Activated CD8-positive, alpha-beta memory T cell treated with anti-CD3 and anti-CD28 coated beads, Interleukin-2, amount 10 ng/mL, durations not matched to agents 7 days and 5 days (primary cell): ENCODE measurements at regions of chr11 and their contacts with region 1.

Region 1: DNA sequence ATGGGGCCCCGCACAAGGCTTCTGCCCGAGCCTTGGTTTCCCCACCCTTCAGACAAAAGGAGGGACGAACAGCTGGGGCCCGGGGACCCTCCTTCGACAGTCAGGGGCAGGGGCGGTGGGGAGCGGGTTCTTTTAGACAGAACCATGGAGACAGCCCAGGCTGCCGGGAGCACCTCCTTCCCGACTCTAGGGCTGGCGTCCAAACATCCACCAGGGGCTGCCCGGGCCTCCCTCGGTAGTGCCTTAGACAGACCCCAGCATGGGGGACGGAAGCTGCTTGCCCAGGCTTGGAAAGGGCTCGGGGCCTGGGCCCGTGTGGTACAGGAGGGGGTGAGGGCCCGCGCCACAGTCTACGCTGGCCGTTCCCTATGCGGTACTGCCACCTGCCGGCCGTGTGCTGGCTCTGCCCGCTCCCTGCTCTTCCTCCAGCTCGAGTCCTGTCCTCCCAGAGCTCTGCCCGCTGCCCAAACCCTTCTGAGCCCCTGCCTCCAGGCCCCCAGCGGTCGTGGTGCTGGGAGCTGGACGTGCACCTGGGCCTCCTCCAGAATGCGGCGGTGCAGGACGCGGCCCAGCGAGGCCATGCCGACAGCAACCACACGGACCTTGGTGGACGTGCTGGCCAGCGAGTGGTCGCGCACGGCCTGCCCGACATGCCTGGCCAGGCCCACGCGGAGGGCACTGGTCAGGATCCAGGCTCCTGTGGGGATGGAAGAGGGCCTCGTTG is 20.1 kb downstream of the TSSC4 start:
- DNase-seq: peak; percentile 75
- ATAC-seq: peak; percentile 93
- H3K4me3 Mint-ChIP-seq: no peak overlapping the region
- H3K27ac Mint-ChIP-seq: no peak overlapping the region
- H3K4me1 Mint-ChIP-seq: no peaks in the 10 kb centered on the region
- H3K27me3 Mint-ChIP-seq: no peaks in the 10 kb centered on the region

Region 2: DNA sequence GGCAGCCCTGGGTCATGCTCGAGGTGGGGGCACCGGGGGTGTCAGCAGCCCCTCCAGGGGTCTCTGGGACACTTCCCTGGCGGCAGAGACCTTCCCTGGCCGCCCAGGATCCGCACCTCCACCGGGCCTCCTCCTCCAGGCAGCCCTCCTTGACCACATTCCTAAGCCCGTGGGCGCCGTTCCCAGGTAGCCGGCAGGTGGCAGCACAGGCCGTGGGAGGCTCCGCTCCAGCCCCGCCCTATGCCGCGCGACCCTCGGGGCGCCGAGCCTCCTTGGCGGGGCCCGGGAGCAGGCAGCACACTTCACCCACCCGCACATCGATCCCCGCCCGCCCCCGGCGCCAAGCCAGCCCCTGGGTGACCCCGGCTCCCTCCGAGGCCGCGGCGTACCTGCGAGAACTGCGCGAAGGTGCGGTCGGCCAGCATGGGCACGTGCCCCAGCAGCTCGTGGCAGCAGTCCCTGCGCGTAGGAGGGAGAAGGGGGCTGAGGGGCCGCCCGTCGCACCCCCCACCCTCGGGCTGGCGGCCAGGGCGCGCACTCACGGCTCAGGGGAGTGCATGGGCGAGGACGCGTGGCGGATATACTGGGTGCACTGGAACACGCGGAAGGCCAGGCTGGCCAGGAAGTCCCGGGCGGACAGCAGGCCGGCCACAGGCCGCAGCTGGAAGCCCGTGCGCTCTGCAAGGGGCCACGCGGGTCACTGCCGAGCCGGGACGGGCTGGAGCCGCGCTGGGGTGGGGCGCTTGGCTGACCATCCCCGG is 254.4 kb before region 1 on chr11:
- CTCF ChIA-PET with region 1: interaction called, 14 read pairs
- DNase-seq: peak; percentile 53
- ATAC-seq: peak; percentile 60
- H3K4me3 Mint-ChIP-seq: no peak overlapping the region
- H3K27ac Mint-ChIP-seq: no peak overlapping the region
- H3K4me1 Mint-ChIP-seq: no peaks in the 10 kb centered on the region
- H3K27me3 Mint-ChIP-seq: no peaks in the 10 kb centered on the region

Region 3: DNA sequence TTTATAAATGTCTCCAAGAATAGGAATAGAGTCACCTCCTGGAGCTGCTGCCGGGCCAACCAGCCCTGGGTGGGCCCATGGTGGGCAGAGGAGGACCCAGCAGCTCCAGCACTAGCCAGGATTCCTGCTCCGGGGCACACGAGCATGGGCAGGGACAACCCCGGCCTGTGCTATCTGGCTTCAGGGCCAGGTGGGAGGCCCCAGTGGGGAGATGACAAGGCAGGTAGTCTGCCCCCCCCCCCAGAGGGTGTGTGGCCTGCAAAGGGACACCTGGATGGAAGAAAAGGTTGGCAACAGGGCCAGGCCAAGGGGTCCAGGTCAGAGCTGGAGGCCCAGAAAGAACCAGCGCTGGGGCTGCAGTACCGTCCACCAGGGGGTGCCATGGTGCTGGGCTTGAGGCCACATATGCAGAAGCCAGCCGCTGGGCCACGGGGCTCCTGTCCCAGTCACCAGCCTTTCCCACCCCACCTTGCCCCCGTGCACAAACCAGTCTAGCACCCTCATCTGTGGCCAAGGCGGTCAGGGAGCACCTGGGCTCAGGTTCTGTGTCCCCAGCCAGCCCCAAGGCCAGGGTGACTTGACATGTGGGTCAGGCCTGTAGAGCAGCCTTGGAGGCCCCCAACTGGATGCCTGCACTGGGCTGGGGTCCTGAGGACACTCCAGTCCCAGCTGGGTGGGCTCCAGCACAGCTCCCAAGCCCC is 115.4 kb before region 1 on chr11:
- CTCF ChIA-PET with region 1: interaction called, 432 read pairs
- DNase-seq: peak; percentile 89
- ATAC-seq: peak; percentile 60
- H3K4me3 Mint-ChIP-seq: peak overlapping the region; percentile 69
- H3K27ac Mint-ChIP-seq: peak overlapping the region; percentile 84
- H3K4me1 Mint-ChIP-seq: peaks cover 42% of the 10 kb centered on the region
- H3K27me3 Mint-ChIP-seq: no peaks in the 10 kb centered on the region

Region 4: DNA sequence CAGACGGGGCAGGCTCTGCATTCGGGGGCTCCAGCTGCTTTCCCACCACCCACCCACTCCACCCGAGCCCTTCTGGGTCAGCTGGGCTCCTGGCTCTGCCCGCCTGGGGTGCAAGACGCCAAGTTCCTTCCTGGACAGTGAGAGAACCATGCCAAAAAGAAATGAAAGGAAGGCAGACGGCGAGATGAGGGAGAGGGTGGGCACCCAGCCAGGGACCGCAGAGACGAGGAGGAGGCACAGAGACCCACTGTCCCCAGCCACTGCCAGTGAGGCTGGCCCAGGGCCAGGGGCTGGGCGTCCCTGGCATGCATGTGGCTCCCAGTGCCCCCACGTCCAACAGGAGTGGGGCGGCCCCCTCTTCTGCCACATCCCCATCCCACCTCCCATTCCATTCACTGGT is 54.4 kb before region 1 on chr11:
- CTCF ChIA-PET with region 1: no interaction called
- DNase-seq: no peak
- ATAC-seq: no peak
- H3K4me3 Mint-ChIP-seq: no peak overlapping the region
- H3K27ac Mint-ChIP-seq: no peak overlapping the region
- H3K4me1 Mint-ChIP-seq: no peaks in the 10 kb centered on the region
- H3K27me3 Mint-ChIP-seq: no peaks in the 10 kb centered on the region

Region 5: DNA sequence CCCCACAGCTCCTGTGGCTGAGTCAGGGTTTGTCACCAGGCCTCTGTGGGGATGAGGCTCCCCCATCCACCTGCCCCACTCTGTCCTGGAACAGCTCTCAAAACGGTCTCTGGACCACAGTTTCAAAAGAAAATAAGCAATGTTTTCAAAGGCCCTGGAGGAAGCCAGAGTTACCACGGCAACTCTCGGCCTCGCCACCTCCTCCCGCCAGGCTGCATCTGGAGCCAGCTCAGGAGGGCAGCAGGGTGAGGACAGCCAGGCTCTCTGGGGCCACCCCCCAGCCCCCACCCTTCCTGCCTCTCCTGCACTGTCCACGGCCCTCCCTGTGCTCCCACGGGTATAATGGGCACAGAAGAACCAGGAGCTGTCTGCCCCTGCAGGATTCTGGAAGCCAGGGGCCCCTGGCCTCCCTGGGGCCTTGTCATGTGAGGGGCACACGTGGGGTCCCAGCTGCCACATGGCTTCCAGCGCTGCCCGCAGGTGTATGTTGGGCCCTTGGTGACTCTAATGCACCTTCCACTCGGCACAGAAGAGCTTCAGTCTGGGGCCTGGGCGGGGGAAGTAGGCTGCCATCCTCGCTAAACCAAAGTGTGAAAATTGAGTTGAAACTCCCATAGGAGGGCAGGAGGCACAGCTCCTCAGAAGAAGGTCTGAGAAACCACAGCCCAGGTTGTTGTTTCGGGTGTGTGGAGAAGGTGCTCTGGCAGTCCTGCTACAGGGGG is 33.2 kb before region 1 on chr11:
- CTCF ChIA-PET with region 1: interaction called, 18 read pairs
- DNase-seq: peak; percentile 65
- ATAC-seq: peak; percentile 40
- H3K4me3 Mint-ChIP-seq: peak overlapping the region; percentile 11
- H3K27ac Mint-ChIP-seq: peak overlapping the region; percentile 84
- H3K4me1 Mint-ChIP-seq: peaks cover 65% of the 10 kb centered on the region
- H3K27me3 Mint-ChIP-seq: no peaks in the 10 kb centered on the region

Region 6: GRCh38 chr11:2532704-2533586 is 112.3 kb after region 1 on chr11:
- CTCF ChIA-PET with region 1: interaction called, 82 read pairs
- DNase-seq: peak; percentile 93
- ATAC-seq: peak; percentile 88
- H3K4me3 Mint-ChIP-seq: peak overlapping the region; percentile 45
- H3K27ac Mint-ChIP-seq: no peak overlapping the region
- H3K4me1 Mint-ChIP-seq: peaks cover 19% of the 10 kb centered on the region
- H3K27me3 Mint-ChIP-seq: peaks cover 2% of the 10 kb centered on the region